Naive thymus-derived CD4-positive, alpha-beta T cell (primary cell): ENCODE measurements at regions of chr6 and their contacts with region 1.

Region 1: DNA sequence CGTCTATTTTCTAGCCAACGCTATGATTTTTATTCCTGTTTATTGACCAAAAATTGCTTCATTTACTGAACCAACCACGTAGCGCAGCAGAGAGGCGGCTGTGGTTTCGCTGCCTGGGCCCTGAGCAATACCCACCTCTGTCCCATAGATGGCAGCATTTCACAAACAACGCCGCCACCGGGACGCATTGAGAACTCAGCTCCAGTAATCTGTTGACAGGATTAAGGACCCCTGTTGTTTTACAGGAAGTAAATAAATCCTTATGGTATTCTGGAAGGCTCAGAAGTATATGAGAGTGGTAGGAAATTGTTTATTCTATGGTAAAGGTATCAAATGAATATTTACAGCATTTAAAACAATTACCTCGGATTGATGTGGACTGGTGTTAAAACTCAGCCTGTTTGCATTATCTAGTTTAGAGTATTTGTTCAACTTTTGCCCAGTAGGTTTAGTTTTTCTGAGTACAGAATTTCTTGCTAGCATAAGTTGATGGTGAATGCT is 547.9 kb upstream of the SLC35B3 start:
- DNase-seq: peak; percentile 12 to 57 (median 35)
- ATAC-seq: peak; percentile 91
- H3K4me3 ChIP-seq: no peak overlapping the region
- H3K4me3 Mint-ChIP-seq: peak overlapping the region in 2 of 10 donors; percentile 15 to 44
- H3K27ac ChIP-seq: no peak overlapping the region
- H3K27ac Mint-ChIP-seq: no peak overlapping the region
- H3K4me1 ChIP-seq: no peaks in the 10 kb centered on the region
- H3K4me1 Mint-ChIP-seq: peaks cover 0 to 2% (median 0%) of the 10 kb centered on the region in 7 donors
- H3K27me3 ChIP-seq: no peaks in the 10 kb centered on the region
- H3K27me3 Mint-ChIP-seq: peaks cover 6 to 39% (median 28%) of the 10 kb centered on the region in 5 donors

Region 2: GRCh38 chr6:8683204-8683603 is 300.0 kb before region 1 on chr6:
- CTCF ChIA-PET with region 1: no interaction called
- POLR2A ChIA-PET with region 1: no interaction called
- intact Hi-C with region 1: no loop called
- DNase-seq: no peak
- ATAC-seq: no peak
- H3K4me3 ChIP-seq: no peak overlapping the region
- H3K4me3 Mint-ChIP-seq: no peak overlapping the region
- H3K27ac ChIP-seq: no peak overlapping the region
- H3K27ac Mint-ChIP-seq: no peak overlapping the region
- H3K4me1 ChIP-seq: no peaks in the 10 kb centered on the region
- H3K4me1 Mint-ChIP-seq: no peaks in the 10 kb centered on the region
- H3K27me3 ChIP-seq: no peaks in the 10 kb centered on the region
- H3K27me3 Mint-ChIP-seq: no peaks in the 10 kb centered on the region

Region 3: GRCh38 chr6:8939615-8940014 is 43.6 kb before region 1 on chr6:
- CTCF ChIA-PET with region 1: no interaction called
- POLR2A ChIA-PET with region 1: no interaction called
- intact Hi-C with region 1: no loop called
- DNase-seq: no peak
- ATAC-seq: no peak
- H3K4me3 ChIP-seq: no peak overlapping the region
- H3K4me3 Mint-ChIP-seq: no peak overlapping the region
- H3K27ac ChIP-seq: no peak overlapping the region
- H3K27ac Mint-ChIP-seq: no peak overlapping the region
- H3K4me1 ChIP-seq: no peaks in the 10 kb centered on the region
- H3K4me1 Mint-ChIP-seq: no peaks in the 10 kb centered on the region
- H3K27me3 ChIP-seq: no peaks in the 10 kb centered on the region
- H3K27me3 Mint-ChIP-seq: no peaks in the 10 kb centered on the region

Region 4: DNA sequence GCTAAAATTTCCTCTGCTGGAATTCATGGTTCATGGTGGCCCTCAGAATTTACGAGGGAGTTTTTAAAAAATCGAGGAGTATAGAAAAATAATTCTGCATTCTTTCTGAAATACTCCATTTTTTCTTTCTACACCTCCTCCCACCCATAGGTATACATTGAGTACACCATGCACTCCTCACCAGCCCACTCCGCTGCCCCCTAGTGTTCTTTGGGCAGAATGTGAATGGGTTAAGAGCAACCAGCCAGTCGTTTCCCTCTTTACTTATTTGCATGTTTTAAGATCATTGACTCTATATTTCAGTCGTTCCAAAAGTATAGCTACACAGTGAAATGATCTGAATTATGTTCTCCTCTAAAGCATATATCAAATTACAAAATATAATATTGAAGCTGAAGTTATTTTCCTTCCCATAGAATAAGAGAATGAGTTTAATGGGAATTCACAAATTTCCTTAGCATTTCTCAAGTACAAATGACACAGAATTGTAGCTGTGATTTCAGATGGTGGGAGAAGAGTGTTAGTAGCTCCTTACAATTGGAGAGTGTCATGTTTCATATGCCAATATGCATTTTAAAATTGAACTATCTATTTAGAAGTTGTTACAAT is 429.8 kb after region 1 on chr6:
- CTCF ChIA-PET with region 1: no interaction called
- POLR2A ChIA-PET with region 1: no interaction called
- intact Hi-C with region 1: loop called (anchors 2 to 10 kb)
- DNase-seq: no peak
- ATAC-seq: no peak
- H3K4me3 ChIP-seq: no peak overlapping the region
- H3K4me3 Mint-ChIP-seq: no peak overlapping the region
- H3K27ac ChIP-seq: no peak overlapping the region
- H3K27ac Mint-ChIP-seq: no peak overlapping the region
- H3K4me1 ChIP-seq: no peaks in the 10 kb centered on the region
- H3K4me1 Mint-ChIP-seq: no peaks in the 10 kb centered on the region
- H3K27me3 ChIP-seq: no peaks in the 10 kb centered on the region
- H3K27me3 Mint-ChIP-seq: no peaks in the 10 kb centered on the region